ENCODE measurements at regions of chr10 and their contacts with region 1.

Region 1: GRCh38 chr10:32357056-32357735 is 10.2 kb upstream of the EPC1 start:
- DNase-seq: peak; percentile 48
- ATAC-seq: peak; percentile 78
- H3K4me3 Mint-ChIP-seq: peak overlapping the region; percentile 76
- H3K27ac Mint-ChIP-seq: peak overlapping the region; percentile 89
- H3K4me1 Mint-ChIP-seq: peaks cover 55% of the 10 kb centered on the region
- H3K27me3 Mint-ChIP-seq: no peaks in the 10 kb centered on the region

Region 2: DNA sequence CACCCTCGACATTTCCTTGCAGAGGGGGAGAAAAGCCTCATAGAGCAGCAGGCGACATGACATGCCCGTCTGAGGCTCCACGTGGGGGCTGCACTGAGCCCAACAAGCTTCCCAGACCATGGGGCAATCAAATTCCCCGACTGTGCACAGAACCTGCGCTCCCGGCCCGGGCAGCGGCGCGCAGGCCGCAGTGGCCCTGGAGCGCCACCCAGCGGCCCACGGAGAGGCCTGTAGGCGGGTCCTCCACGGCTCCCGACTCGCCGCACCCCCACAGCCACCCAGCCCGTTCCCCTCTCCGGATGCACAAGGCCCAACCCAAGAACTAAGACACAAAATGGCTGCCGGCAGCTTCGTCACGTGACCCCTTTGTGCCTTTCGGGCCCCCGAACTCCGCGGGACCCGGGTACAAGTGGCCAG is 11.1 kb before region 1 on chr10:
- POLR2A ChIA-PET with region 1: interaction called, 12 read pairs
- DNase-seq: peak; percentile 95
- ATAC-seq: peak; percentile 89
- H3K4me3 Mint-ChIP-seq: peak overlapping the region; percentile 87
- H3K27ac Mint-ChIP-seq: peak overlapping the region; percentile 98
- H3K4me1 Mint-ChIP-seq: peaks cover 45% of the 10 kb centered on the region
- H3K27me3 Mint-ChIP-seq: no peaks in the 10 kb centered on the region

Region 3: DNA sequence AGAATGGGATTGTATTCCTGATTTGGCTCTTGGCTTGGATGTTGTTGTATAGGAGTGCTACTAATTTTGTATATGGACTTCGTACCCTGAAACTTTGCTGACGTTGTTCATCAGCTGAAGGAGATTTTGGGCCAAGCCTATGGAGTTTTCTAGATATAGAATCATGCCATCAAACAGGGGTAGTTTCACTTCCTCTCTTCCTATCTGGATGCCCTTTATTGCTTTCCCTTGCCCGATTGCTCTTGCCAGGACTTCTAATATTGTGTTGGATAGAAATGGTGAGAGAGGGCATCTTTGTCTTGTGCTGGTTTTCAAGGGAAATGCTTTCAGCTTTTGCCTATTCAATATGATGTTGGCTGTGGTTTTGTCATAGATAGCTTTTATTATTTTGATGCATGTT is 181.1 kb after region 1 on chr10:
- POLR2A ChIA-PET with region 1: no interaction called
- DNase-seq: no peak
- ATAC-seq: no peak
- H3K4me3 Mint-ChIP-seq: no peak overlapping the region
- H3K27ac Mint-ChIP-seq: no peak overlapping the region
- H3K4me1 Mint-ChIP-seq: no peaks in the 10 kb centered on the region
- H3K27me3 Mint-ChIP-seq: no peaks in the 10 kb centered on the region